GM18951 (cell line): ENCODE measurements at regions of chr12 and their contacts with region 1.

Region 1: GRCh38 chr12:1791104-1791841 is 29.1 kb upstream of the LRTM2 start:
- POLR2A ChIP-seq: no peak

Region 2: DNA sequence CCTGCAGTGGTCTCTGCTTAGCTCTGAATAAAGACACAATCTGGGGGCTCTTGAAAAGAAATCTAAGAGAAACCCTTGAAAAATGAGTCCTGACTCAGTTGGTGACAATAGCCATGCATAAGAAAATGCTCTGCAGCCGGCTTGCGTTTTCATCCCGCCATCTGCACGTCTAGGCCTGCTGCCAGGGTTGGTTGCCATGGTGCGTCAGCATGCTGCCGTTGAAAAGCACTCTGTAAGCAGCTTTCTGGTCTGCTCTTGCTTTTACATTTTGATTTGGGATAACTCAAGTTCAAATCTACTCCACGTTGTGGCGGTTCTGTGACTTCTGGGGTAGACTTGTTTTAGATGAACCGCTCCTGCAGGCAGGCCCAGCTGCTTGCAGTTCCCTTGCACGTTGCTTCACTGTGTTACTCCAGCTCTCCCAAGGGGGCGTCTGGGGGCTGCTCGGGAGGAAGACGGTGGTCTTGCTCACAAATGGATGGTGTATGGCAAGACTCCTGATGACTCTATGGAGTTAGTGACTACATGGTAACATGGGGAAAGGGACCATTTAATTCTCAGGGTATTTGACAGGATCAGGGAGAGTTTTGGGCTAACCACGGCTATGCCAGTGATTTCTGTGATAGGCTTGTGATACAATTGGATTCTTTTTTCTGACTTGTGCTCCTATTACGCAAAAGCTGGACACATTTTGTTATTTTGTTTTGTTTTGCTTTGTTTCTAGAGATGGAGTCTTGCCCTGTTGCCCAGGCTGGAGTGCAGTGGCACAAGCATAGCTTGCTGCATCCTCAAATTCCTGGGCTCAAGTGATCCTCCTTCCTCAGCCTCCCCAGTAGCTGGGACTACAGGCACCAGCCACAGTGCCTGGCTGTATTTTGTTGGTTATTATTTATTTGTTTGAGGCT is 146.5 kb before region 1 on chr12:
- in situ Hi-C with region 1: loop called (anchors 5 kb)
- POLR2A ChIP-seq: no peak

Region 3: GRCh38 chr12:1916371-1917171 is 125.3 kb after region 1 on chr12:
- in situ Hi-C with region 1: no loop called
- POLR2A ChIP-seq: no peak

Region 4: GRCh38 chr12:1939801-1940607 is 148.7 kb after region 1 on chr12:
- in situ Hi-C with region 1: loop called (anchors 5 kb)
- POLR2A ChIP-seq: no peak

Region 5: GRCh38 chr12:2013527-2014223 is 222.4 kb after region 1 on chr12:
- in situ Hi-C with region 1: no loop called
- POLR2A ChIP-seq: no peak

Region 6: GRCh38 chr12:2163172-2163941 is 372.1 kb after region 1 on chr12:
- in situ Hi-C with region 1: no loop called
- POLR2A ChIP-seq: no peak